Common myeloid progenitor, CD34-positive (primary cell): ENCODE measurements at regions of chr7 and their contacts with region 1.

Region 1: DNA sequence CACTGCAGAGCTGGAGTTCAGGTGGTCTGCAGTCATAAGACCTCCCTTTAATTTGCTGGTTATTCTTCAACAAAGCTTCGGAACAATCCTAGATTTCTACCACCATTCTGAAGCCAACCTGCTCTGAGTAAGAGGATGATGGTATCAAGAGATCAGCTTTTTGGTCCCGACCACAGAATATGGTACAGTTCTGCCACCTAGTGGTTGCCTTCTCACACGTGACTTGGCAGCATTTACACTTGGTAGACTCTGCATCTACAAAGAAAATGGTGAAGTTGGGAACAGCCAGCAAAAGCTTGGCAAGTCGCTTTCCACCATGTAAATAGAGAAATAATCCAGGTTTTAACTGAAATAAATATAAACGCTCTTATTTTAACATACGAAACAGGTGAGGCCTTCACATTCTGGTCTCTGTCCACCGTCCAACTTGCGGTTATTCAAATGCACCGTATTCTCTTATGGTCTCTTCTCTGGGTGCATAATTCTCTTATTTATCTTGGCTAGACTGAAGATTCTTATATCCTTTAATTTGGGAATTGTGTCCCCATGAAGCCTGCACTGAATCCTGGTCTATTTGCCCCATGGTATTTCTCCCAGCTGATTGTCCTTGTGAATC is 173.9 kb upstream of the GRM3 start:
- DNase-seq: peak; percentile 67 to 80 (median 75)
- H3K4me3 ChIP-seq: no peak overlapping the region
- H3K27ac ChIP-seq: no peak overlapping the region
- H3K4me1 ChIP-seq: no peaks in the 10 kb centered on the region
- H3K27me3 ChIP-seq: no peaks in the 10 kb centered on the region

Region 2: GRCh38 chr7:85890244-85890811 is 579.5 kb before region 1 on chr7:
- CTCF ChIA-PET with region 1: interaction called, 11 read pairs
- POLR2A ChIA-PET with region 1: no interaction called
- DNase-seq: peak; percentile 15 to 28 (median 22)
- H3K4me3 ChIP-seq: no peak overlapping the region
- H3K27ac ChIP-seq: no peak overlapping the region
- H3K4me1 ChIP-seq: no peaks in the 10 kb centered on the region
- H3K27me3 ChIP-seq: no peaks in the 10 kb centered on the region